ENCODE measurements at regions of chr15 and their contacts with region 1.

Region 1: DNA sequence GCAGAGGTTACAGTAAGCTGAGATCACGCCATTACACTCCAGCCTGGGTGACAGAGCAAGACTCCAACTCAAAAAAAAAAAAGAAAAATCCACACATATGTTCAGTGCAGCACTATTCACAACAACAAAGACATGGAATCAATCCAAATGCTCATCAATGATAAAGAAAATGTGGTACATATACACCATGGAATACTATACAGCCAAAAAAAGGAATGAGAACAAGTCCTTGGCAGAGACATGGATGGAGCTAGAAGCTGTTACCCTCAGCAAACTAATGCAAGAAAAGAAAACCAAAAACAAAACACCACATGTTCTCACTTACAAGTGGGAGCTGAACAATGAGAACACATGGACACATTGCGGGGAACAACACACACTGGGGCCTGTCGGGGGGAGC is 25.5 kb downstream of the PYGO1 start:
- DNase-seq: no peak
- H3K4me3 ChIP-seq: no peak overlapping the region
- H3K27ac ChIP-seq: no peak overlapping the region
- H3K4me1 ChIP-seq: no peaks in the 10 kb centered on the region
- H3K27me3 ChIP-seq: no peaks in the 10 kb centered on the region
- CTCF ChIP-seq: no peak
- POLR2A ChIP-seq: no peak

Region 2: GRCh38 chr15:55546718-55547117 is 15.9 kb before region 1 on chr15:
- CTCF ChIA-PET with region 1: no interaction called
- POLR2A ChIA-PET with region 1: no interaction called
- dilution Hi-C with region 1: no loop called
- intact Hi-C with region 1: loop called (anchors 1 kb)
- DNase-seq: no peak
- H3K4me3 ChIP-seq: no peak overlapping the region
- H3K27ac ChIP-seq: no peak overlapping the region
- H3K4me1 ChIP-seq: no peaks in the 10 kb centered on the region
- H3K27me3 ChIP-seq: no peaks in the 10 kb centered on the region
- CTCF ChIP-seq: no peak
- POLR2A ChIP-seq: no peak